ENCODE measurements at regions of chr2 and their contacts with region 1.

Region 1: GRCh38 chr2:73896362-73897239 is 3.8 kb downstream of the ACTG2 start:
- DNase-seq: peak; percentile 72
- H3K4me3 Mint-ChIP-seq: peak overlapping the region; percentile 8
- H3K27ac Mint-ChIP-seq: peak overlapping the region; percentile 65
- H3K4me1 Mint-ChIP-seq: peaks cover 33% of the 10 kb centered on the region
- H3K27me3 Mint-ChIP-seq: no peaks in the 10 kb centered on the region

Region 2: GRCh38 chr2:73818296-73818695 is 78.3 kb before region 1 on chr2:
- CTCF ChIA-PET with region 1: no interaction called
- intact Hi-C with region 1: no loop called
- DNase-seq: no peak
- H3K4me3 Mint-ChIP-seq: no peak overlapping the region
- H3K27ac Mint-ChIP-seq: no peak overlapping the region
- H3K4me1 Mint-ChIP-seq: peaks cover 28% of the 10 kb centered on the region
- H3K27me3 Mint-ChIP-seq: peaks cover 3% of the 10 kb centered on the region

Region 3: GRCh38 chr2:73859721-73860586 is 36.6 kb before region 1 on chr2:
- CTCF ChIA-PET with region 1: no interaction called
- intact Hi-C with region 1: loop called (anchors 2 kb)
- DNase-seq: peak; percentile 73
- H3K4me3 Mint-ChIP-seq: no peak overlapping the region
- H3K27ac Mint-ChIP-seq: no peak overlapping the region
- H3K4me1 Mint-ChIP-seq: peaks cover 15% of the 10 kb centered on the region
- H3K27me3 Mint-ChIP-seq: no peaks in the 10 kb centered on the region

Region 4: GRCh38 chr2:73886357-73886756 is 10.2 kb before region 1 on chr2:
- CTCF ChIA-PET with region 1: interaction called, 3 read pairs
- intact Hi-C with region 1: loop called (anchors 1 kb)
- DNase-seq: peak; percentile 73
- H3K4me3 Mint-ChIP-seq: no peak overlapping the region
- H3K27ac Mint-ChIP-seq: peak overlapping the region; percentile 54
- H3K4me1 Mint-ChIP-seq: peaks cover 24% of the 10 kb centered on the region
- H3K27me3 Mint-ChIP-seq: no peaks in the 10 kb centered on the region

Region 5: GRCh38 chr2:73926493-73927338 is 30.1 kb after region 1 on chr2 and contains the start of gene DGUOK:
- CTCF ChIA-PET with region 1: no interaction called
- intact Hi-C with region 1: loop called (anchors 1 kb)
- DNase-seq: peak; percentile 99
- H3K4me3 Mint-ChIP-seq: peak within 1 kb of the TSS; percentile 87
- H3K27ac Mint-ChIP-seq: peak within 1 kb of the TSS; percentile 94
- H3K4me1 Mint-ChIP-seq: peaks cover 44% of the 10 kb centered on the region
- H3K27me3 Mint-ChIP-seq: no peaks in the 10 kb centered on the region
- total RNA-seq, gene DGUOK: 112 to 115 TPM

Region 6: GRCh38 chr2:73947412-73948018 is 50.9 kb after region 1 on chr2:
- CTCF ChIA-PET with region 1: no interaction called
- intact Hi-C with region 1: no loop called
- DNase-seq: no peak
- H3K4me3 Mint-ChIP-seq: no peak overlapping the region
- H3K27ac Mint-ChIP-seq: no peak overlapping the region
- H3K4me1 Mint-ChIP-seq: peaks cover 90% of the 10 kb centered on the region
- H3K27me3 Mint-ChIP-seq: no peaks in the 10 kb centered on the region